Naive thymus-derived CD4-positive, alpha-beta T cell (primary cell): ENCODE measurements at regions of chr4 and their contacts with region 1.

Region 1: DNA sequence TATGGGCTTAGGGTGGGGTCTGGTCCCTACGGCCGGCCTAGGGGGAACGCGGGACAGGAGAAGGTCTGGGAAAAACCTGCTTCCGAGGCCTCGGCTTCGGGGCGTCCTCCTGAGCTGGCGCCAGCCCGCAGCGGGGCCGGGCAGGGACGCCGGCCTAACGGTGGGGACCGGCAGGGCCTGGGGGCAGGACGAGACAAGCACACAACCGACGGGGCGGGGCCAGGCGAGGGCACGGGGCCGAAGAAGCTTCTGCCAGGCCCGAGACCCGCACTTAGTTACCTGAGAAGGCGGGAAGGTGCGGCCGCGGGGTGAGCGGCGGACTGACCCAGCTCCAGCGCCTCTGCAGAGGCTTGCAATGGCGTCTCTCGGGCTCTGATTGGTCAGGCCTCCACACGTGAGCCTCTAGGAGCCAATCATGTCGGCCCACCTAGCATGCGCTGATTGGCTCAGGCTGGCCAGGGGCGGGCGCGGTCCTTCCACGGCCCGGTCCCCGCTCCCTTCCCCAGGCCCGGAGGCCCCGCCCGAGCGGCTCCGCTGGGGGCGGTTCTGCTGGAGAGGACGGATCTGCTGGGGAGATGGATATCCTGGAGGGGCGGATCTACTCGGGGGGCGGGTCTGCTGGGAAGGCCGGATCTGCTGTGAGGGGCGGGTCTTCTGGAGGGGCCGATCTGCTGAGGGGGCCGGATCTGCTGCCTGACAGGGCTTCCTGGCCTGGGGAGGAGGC is 44.3 kb downstream of the CPLX1 start:
- DNase-seq: peak; percentile 96 to 99 (median 98)
- ATAC-seq: peak; percentile 96
- H3K4me3 ChIP-seq: peak overlapping the region; percentile 83
- H3K4me3 Mint-ChIP-seq: peak overlapping the region; percentile 84 to 97 (median 90)
- H3K27ac ChIP-seq: peak overlapping the region; percentile 90
- H3K27ac Mint-ChIP-seq: peak overlapping the region; percentile 81 to 98 (median 95)
- H3K4me1 ChIP-seq: peaks cover 29% of the 10 kb centered on the region in 2 donors
- H3K4me1 Mint-ChIP-seq: peaks cover 42 to 62% (median 47%) of the 10 kb centered on the region in 7 donors
- H3K27me3 ChIP-seq: peaks cover 0 to 6% of the 10 kb centered on the region in 2 donors
- H3K27me3 Mint-ChIP-seq: peaks cover 10 to 22% (median 16%) of the 10 kb centered on the region in 5 donors

Region 2: GRCh38 chr4:124275-125081 is 657.2 kb before region 1 on chr4 and contains the start of gene ZNF718:
- CTCF ChIA-PET with region 1: no interaction called
- POLR2A ChIA-PET with region 1: no interaction called
- intact Hi-C with region 1: loop called in 1 of 2 experiments (anchors 5 kb)
- DNase-seq: peak; percentile 17 to 94 (median 90)
- ATAC-seq: peak; percentile 93
- H3K4me3 ChIP-seq: peak within 1 kb of the TSS; percentile 89
- H3K4me3 Mint-ChIP-seq: peak within 1 kb of the TSS; percentile 91 to 100 (median 98)
- H3K27ac ChIP-seq: peak within 1 kb of the TSS; percentile 94
- H3K27ac Mint-ChIP-seq: peak within 1 kb of the TSS; percentile 93 to 100 (median 99)
- H3K4me1 ChIP-seq: peaks cover 22 to 30% of the 10 kb centered on the region in 2 donors
- H3K4me1 Mint-ChIP-seq: peaks cover 21 to 52% (median 42%) of the 10 kb centered on the region in 7 donors
- H3K27me3 ChIP-seq: no peaks in the 10 kb centered on the region
- H3K27me3 Mint-ChIP-seq: no peaks in the 10 kb centered on the region
- total RNA-seq, gene ZNF718: 2.4 to 12.3 (median 10.0) TPM

Region 3: DNA sequence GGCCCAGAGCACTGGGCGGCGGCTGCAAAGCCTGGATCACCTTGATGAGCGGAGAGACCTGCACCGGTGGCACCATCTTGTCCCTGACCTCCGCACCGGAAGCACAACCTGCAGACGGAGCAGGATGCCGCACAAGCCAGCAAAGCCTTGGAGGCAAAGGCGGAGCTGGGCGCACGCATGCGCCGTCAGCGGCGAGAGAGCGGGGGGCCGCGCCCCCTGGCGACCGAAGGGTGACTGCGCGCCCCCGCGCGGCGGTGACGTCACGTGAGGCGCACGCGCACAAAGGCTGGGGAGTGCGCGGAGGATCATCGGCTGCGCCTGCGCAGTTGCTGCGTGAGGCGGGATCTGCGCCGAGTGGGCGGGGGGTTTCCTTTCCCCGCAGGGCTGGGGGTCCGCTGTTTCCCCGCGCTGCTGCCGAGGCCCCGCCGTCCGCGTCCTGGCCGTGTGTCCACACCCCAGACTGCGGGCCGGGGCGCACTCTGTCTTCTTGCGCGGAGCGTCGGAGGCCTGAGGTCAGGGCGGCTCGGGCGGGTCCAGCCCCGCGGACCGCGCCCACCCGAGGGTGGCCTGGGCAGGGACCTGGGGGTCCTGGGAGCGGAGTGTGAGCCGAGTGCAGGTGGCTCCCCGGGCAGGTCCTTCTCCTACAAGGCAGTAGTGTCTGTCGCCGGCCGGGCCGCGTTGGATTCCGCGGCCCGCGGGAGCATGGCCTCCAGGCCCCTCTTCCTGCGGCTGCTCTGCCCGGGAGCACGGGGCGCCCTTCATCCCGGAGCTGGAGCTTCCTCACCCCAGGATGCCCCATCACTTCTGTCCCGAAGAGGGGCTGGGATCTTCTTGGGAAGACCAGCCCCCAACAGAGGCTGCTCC is 107.3 kb before region 1 on chr4 and contains the starts of genes ATP5ME and MYL5:
- CTCF ChIA-PET with region 1: no interaction called
- POLR2A ChIA-PET with region 1: no interaction called
- intact Hi-C with region 1: loop called (anchors 1 kb)
- DNase-seq: peak; percentile 97 to 100 (median 99)
- ATAC-seq: peak; percentile 96
- H3K4me3 ChIP-seq: peak within 1 kb of the TSS; percentile 88
- H3K4me3 Mint-ChIP-seq: peak within 1 kb of the TSS; percentile 84 to 92 (median 88)
- H3K27ac ChIP-seq: peak within 1 kb of the TSS; percentile 100
- H3K27ac Mint-ChIP-seq: peak within 1 kb of the TSS; percentile 80 to 91 (median 89)
- H3K4me1 ChIP-seq: peaks cover 7 to 16% of the 10 kb centered on the region in 2 donors
- H3K4me1 Mint-ChIP-seq: peaks cover 7 to 15% (median 8%) of the 10 kb centered on the region in 7 donors
- H3K27me3 ChIP-seq: no peaks in the 10 kb centered on the region
- H3K27me3 Mint-ChIP-seq: no peaks in the 10 kb centered on the region
- total RNA-seq, gene ATP5ME: 115 to 183 (median 123) TPM
- total RNA-seq, gene MYL5: 19.9 to 32.7 (median 23.8) TPM

Region 4: DNA sequence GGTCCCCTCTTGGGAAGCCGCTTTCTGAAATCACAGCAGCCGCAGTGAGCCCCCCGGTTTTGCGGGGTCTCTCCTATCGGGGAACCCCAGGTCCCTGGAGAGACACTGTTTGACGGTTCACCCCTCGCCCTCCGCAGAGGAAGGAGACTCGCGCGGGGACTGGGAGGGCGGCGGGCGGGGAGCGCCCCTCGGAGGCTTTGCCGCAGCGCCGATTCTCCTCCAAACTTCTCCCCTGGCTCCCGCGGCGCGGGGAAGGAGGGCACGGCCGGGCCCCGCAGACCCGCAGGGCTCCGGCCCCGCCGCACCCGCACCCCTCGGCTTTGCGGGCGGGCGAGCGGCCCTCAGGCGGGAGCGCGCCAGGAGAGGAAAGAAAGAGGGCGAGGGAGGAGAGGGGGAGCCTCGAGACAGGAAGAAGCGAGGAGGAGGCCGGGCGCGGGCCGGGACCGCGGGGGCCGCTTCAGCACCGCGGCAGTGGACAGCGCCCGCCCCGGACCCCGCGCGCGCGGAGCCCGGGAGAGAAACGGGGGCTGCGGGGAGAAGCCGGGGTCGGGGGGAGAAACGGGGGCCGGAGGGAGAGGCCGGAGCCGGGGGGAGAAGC is 43.7 kb after region 1 on chr4:
- CTCF ChIA-PET with region 1: no interaction called
- POLR2A ChIA-PET with region 1: no interaction called
- intact Hi-C with region 1: loop called in 1 of 2 experiments (anchors 1 kb)
- DNase-seq: peak in 8 of 9 donors; percentile 10 to 55 (median 38)
- ATAC-seq: peak; percentile 76
- H3K4me3 ChIP-seq: no peak overlapping the region
- H3K4me3 Mint-ChIP-seq: peak overlapping the region in 5 of 10 donors; percentile 29 to 73 (median 37)
- H3K27ac ChIP-seq: no peak overlapping the region
- H3K27ac Mint-ChIP-seq: no peak overlapping the region
- H3K4me1 ChIP-seq: no peaks in the 10 kb centered on the region
- H3K4me1 Mint-ChIP-seq: peaks cover 0 to 11% (median 6%) of the 10 kb centered on the region in 7 donors
- H3K27me3 ChIP-seq: peaks cover 4 to 6% of the 10 kb centered on the region in 2 donors
- H3K27me3 Mint-ChIP-seq: peaks cover 21 to 54% (median 45%) of the 10 kb centered on the region in 5 donors

Region 5: GRCh38 chr4:973431-974397 is 192.1 kb after region 1 on chr4 and contains the start of gene DGKQ:
- CTCF ChIA-PET with region 1: no interaction called
- POLR2A ChIA-PET with region 1: interaction called, 5 read pairs
- intact Hi-C with region 1: loop called (anchors 1 to 2 kb)
- DNase-seq: peak; percentile 68 to 93 (median 83)
- ATAC-seq: peak; percentile 96
- H3K4me3 ChIP-seq: peak within 1 kb of the TSS; percentile 56
- H3K4me3 Mint-ChIP-seq: peak within 1 kb of the TSS; percentile 19 to 75 (median 56)
- H3K27ac ChIP-seq: peak within 1 kb of the TSS; percentile 72
- H3K27ac Mint-ChIP-seq: no peak within 1 kb of the TSS
- H3K4me1 ChIP-seq: peaks cover 13 to 26% of the 10 kb centered on the region in 2 donors
- H3K4me1 Mint-ChIP-seq: peaks cover 0 to 17% (median 10%) of the 10 kb centered on the region in 7 donors
- H3K27me3 ChIP-seq: no peaks in the 10 kb centered on the region
- H3K27me3 Mint-ChIP-seq: no peaks in the 10 kb centered on the region
- total RNA-seq, gene DGKQ: 14.9 to 28.0 (median 22.7) TPM

Region 6: DNA sequence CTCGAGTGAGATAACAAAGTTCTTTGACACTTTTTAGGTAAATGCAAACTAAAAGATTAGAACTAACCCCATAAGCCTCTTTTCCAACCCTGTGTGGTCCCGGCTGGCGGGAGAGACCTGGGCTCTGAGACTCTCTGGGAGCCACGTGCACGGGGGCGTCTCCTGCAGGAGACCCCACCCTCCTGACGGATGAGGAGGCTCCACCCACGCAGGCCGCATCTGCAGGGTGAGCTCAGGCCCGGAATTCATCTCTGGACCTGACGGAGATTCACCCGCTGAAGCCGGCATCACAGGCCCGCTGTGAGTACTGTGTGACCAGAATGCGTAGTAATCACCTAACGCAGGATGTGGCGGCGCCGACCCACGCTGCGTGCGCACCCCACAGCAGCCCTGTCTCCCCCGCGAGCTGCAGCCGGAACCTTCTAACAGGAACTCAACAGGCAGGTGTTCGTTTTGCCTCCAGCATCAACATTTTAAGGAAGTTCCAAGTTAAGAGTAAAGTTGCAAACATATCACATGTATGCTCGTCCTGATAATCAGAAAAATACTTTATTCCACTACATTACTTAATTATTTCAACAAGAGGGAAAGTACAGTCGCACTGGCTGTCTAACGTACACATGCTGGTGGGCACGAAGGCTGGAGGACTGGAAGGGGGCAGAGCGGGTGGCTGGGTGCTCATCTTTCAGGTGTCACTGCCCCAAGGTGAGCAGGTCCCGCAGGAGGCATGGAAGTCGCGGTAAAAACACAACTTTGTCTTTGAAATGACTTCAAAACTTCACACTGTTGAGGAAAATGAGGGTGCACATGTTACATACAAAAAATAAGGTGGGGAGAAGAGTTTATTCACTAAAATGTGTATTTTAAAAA is 274.3 kb after region 1 on chr4:
- CTCF ChIA-PET with region 1: no interaction called
- POLR2A ChIA-PET with region 1: interaction called, 5 read pairs
- intact Hi-C with region 1: loop called in 1 of 2 experiments (anchors 5 kb)
- DNase-seq: peak; percentile 65 to 93 (median 91)
- ATAC-seq: peak; percentile 96
- H3K4me3 ChIP-seq: peak overlapping the region; percentile 74
- H3K4me3 Mint-ChIP-seq: peak overlapping the region; percentile 74 to 89 (median 85)
- H3K27ac ChIP-seq: peak overlapping the region; percentile 67
- H3K27ac Mint-ChIP-seq: peak overlapping the region; percentile 87 to 98 (median 95)
- H3K4me1 ChIP-seq: peaks cover 13 to 14% of the 10 kb centered on the region in 2 donors
- H3K4me1 Mint-ChIP-seq: peaks cover 8 to 17% (median 10%) of the 10 kb centered on the region in 7 donors
- H3K27me3 ChIP-seq: no peaks in the 10 kb centered on the region
- H3K27me3 Mint-ChIP-seq: peaks cover 0 to 17% (median 0%) of the 10 kb centered on the region in 5 donors

Region 7: GRCh38 chr4:2262143-2262943 is 1480.7 kb after region 1 on chr4:
- CTCF ChIA-PET with region 1: no interaction called
- POLR2A ChIA-PET with region 1: no interaction called
- intact Hi-C with region 1: loop called in 1 of 2 experiments (anchors 5 kb)
- DNase-seq: peak; percentile 95 to 99 (median 98)
- ATAC-seq: peak; percentile 93
- H3K4me3 ChIP-seq: peak overlapping the region; percentile 69
- H3K4me3 Mint-ChIP-seq: peak overlapping the region; percentile 61 to 85 (median 76)
- H3K27ac ChIP-seq: peak overlapping the region; percentile 95
- H3K27ac Mint-ChIP-seq: peak overlapping the region; percentile 61 to 87 (median 83)
- H3K4me1 ChIP-seq: peaks cover 8 to 23% of the 10 kb centered on the region in 2 donors
- H3K4me1 Mint-ChIP-seq: peaks cover 0 to 11% (median 0%) of the 10 kb centered on the region in 7 donors
- H3K27me3 ChIP-seq: no peaks in the 10 kb centered on the region
- H3K27me3 Mint-ChIP-seq: no peaks in the 10 kb centered on the region